Right ventricle myocardium inferior (tissue), 1 donor: ENCODE measurements at regions of chr21 and their contacts with region 1.

Region 1: GRCh38 chr21:35840197-35840799 is 220.0 kb downstream of the SETD4 start:
- DNase-seq: no peak
- ATAC-seq: no peak

Region 2: DNA sequence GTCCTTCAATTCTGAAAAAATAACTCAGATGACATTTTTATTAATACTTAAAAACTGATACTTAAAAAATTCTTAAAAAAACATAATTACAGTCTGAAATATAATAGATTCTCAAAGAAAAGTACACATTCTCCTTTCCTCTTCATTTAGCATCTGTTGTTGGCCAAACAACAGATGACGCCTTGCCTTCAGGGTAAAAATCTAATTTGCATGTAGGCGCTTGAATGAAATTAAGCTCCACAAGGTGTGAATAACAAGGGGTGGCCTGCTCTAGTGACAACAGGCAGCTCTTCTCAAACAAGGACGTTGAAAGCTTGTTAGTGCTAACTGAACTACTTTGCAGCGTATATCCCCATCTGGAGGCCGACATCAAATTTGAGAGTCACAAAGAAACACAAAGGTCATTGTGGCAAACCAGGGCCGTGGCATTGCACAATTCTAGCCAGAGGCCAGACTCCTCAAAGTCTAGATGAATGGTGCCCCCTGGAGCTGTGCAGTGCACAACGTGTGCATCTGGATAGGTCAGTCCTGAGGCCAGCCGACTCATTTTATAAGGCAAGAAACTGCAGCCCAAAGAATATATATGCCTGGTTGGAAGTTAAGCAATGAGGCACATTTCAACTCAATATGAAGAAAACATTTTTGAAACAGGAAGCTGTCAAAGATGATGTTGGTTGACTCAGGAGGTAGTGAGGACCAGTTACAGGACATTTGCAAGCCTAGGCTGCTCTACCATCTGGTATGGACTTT is 332.0 kb before region 1 on chr21:
- intact Hi-C with region 1: loop called (anchors 10 kb)
- DNase-seq: peak; percentile 81
- ATAC-seq: peak; percentile 87

Region 3: DNA sequence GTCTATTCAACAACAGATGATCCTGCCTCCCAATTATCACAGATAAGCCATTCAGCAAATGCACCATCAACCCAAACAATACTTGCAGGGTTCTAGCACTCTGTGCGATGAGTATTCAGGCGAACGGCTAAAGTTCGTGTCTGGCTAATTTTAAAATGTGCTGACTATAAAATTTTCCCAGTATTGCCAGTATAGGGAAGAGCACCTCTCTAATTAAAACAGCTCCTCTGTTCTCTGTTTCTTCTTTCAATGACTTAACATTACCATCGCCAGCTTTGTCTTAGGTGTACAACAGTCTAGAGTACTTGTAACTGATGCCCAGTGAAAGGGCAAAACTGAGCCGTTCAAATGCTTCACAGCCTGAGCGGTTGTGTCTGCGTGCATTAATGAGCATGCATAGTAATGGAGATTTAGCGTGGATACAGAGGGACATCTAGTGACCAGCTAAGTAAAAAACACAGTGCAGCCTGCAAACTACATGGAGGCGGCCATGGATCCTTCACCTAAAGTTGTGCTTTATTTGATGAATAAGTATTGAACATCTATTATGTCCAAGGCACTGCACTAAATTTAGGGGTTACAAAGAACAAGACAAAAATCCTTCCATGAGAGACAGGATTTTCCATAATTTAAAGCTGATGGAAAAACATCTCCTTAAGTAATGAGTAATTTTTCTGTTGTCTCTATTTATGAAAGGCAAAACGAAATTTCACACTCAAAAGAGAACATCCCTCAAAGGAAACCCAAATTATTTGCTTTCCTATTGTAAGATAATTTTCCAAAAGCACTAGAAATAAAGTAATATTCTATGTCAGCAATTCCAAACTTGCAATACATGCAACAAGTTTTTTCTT is 100.0 kb after region 1 on chr21:
- intact Hi-C with region 1: loop called (anchors 5 kb)
- DNase-seq: no peak
- ATAC-seq: peak; percentile 96